ENCODE measurements at regions of chr3 and their contacts with region 1.

Region 1: DNA sequence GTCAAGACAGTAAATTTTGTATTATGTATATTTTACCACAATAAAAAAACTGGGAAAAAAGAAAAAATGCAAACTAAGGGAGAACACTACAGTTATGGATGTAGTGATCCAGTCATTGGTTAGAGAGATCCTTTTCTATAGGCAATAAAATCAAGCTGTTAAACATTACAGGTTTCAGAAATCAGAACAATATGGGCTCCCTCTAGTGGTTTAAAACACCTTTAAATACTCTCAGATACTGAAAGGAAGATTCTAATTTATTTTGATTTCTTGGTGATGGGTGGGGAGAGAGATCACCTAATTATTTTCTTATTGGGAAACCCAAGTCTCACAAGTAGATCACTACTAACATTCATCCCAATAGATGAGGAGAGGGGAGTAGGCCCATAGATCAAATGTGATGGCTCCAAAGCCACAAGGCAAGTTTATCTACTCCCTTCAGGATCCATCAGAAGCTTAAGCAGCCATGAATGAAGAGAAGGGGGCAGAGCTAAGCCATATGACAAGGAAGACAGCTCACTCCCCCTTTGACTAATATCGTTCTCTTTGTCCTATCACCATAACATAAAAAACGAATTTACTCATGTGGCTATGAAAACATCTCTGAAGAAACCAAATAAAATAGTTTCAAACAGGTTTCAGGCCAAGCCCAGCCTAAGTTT is 118.6 kb downstream of the ANO10 start:
- DNase-seq: no peak
- ATAC-seq: peak in 1 of 2 donors; percentile 22
- H3K4me3 ChIP-seq: no peak overlapping the region
- H3K27ac ChIP-seq: no peak overlapping the region
- H3K4me1 ChIP-seq: peaks cover 2% of the 10 kb centered on the region
- H3K27me3 ChIP-seq: no peaks in the 10 kb centered on the region

Region 2: DNA sequence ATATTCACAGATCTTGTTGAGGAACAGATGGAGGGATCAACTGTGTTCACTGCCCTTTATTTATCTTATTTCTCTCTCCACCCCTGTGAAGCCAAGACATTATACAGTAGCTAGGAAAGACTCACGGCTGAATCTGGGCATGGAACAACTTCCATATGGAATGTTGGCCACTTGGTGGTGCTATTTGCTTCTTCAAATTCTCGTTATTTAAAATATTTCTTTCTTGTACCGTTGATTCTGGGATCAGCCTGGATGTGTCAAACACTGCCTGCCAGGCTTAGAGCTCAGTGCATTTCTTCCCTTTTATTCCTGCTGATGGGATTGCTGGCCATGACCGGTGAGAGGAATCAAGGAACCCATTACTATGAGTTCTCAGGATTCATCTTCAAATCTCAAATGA is 541.6 kb before region 1 on chr3:
- intact Hi-C with region 1: loop called in 1 of 4 experiments (anchors 10 kb)
- DNase-seq: peak in 1 of 3 donors; percentile 57
- ATAC-seq: peak; percentile 67 to 70
- H3K4me3 ChIP-seq: no peak overlapping the region
- H3K27ac ChIP-seq: no peak overlapping the region
- H3K4me1 ChIP-seq: no peaks in the 10 kb centered on the region
- H3K27me3 ChIP-seq: no peaks in the 10 kb centered on the region

Region 3: GRCh38 chr3:43162230-43163084 is 340.7 kb before region 1 on chr3:
- intact Hi-C with region 1: loop called (anchors 5 to 10 kb)
- DNase-seq: no peak
- ATAC-seq: peak; percentile 60 to 74
- H3K4me3 ChIP-seq: no peak overlapping the region
- H3K27ac ChIP-seq: no peak overlapping the region
- H3K4me1 ChIP-seq: no peaks in the 10 kb centered on the region
- H3K27me3 ChIP-seq: no peaks in the 10 kb centered on the region

Region 4: DNA sequence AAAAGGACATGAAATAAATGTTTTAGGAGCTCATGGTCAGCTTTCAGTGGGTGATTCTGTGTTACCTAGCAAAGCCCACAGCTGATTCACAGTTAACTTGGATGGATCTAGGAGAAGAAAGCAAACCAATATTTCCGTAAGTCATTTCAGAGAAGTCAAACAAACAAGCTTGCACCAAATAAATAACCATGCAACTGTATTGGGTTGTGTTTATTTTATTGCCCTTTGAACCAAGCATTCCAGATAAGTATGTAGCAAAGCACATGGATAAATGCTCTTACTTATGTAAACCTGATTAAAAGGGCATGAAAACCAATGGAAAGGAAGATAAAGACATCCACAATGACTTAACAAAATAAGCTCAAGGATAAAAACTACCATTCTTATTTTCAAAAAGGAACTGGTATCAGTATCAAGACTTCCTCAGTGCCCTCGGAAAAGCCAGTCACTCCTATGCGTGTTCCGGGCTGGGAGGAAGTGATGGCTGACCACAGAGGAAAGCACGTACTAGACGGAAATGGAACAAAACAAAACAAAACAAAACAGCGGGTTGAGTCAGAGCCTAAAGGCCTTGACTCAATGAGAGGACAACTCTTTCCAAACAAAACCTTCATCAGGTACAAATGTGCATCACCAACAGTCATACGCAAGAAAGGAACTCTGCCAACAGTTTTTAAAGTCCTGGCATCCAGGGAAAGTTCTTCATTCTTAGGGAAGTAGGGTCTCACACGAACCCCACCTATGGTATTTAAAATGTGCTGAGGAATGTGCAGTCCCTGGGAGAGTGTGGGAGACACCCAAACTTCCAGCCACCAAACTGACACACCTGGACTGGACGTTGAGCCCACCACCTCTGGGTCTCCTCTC is 113.6 kb before region 1 on chr3:
- intact Hi-C with region 1: loop called in 1 of 4 experiments (anchors 10 kb)
- DNase-seq: peak; percentile 64 to 75 (median 74)
- ATAC-seq: peak; percentile 80 to 86
- H3K4me3 ChIP-seq: no peak overlapping the region
- H3K27ac ChIP-seq: peak overlapping the region; percentile 83
- H3K4me1 ChIP-seq: peaks cover 16% of the 10 kb centered on the region
- H3K27me3 ChIP-seq: no peaks in the 10 kb centered on the region

Region 5: DNA sequence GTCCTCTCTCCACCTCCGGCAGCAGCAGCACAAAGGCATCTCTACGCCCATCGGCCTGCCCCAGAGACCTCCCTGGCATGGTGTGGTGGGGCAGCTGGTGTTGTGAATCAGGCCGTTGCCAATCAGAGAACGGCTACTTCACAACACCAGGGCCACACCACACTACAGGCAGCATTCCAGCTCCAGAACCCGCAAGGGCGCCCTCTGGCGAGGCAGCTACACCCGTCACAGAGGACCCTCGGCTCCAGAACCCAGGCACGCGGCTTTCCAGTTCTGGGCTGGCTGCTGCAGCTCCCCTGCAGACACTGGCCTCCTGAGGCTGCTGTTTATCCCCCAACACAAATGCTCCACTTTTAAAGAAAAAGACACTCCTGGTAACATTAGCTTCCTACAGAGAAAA is 610.9 kb after region 1 on chr3:
- intact Hi-C with region 1: no loop called
- DNase-seq: peak; percentile 39 to 78 (median 73)
- ATAC-seq: peak in 1 of 2 donors; percentile 68
- H3K4me3 ChIP-seq: no peak overlapping the region
- H3K27ac ChIP-seq: no peak overlapping the region
- H3K4me1 ChIP-seq: no peaks in the 10 kb centered on the region
- H3K27me3 ChIP-seq: no peaks in the 10 kb centered on the region